B cell (primary cell): ENCODE measurements at regions of chr7 and their contacts with region 1.

Region 1: GRCh38 chr7:77399816-77400215 is 16.3 kb downstream of the GSAP start:
- DNase-seq: no peak
- ATAC-seq: no peak
- H3K4me3 ChIP-seq: no peak overlapping the region
- H3K4me3 Mint-ChIP-seq: peak overlapping the region; percentile 58
- H3K27ac ChIP-seq: peak overlapping the region in 1 of 2 donors; percentile 25
- H3K27ac Mint-ChIP-seq: peak overlapping the region; percentile 84
- H3K4me1 ChIP-seq: peaks cover 19 to 23% of the 10 kb centered on the region in 2 donors
- H3K4me1 Mint-ChIP-seq: peaks cover 45% of the 10 kb centered on the region
- H3K27me3 ChIP-seq: no peaks in the 10 kb centered on the region
- H3K27me3 Mint-ChIP-seq: no peaks in the 10 kb centered on the region
- CTCF ChIP-seq: no peak

Region 2: DNA sequence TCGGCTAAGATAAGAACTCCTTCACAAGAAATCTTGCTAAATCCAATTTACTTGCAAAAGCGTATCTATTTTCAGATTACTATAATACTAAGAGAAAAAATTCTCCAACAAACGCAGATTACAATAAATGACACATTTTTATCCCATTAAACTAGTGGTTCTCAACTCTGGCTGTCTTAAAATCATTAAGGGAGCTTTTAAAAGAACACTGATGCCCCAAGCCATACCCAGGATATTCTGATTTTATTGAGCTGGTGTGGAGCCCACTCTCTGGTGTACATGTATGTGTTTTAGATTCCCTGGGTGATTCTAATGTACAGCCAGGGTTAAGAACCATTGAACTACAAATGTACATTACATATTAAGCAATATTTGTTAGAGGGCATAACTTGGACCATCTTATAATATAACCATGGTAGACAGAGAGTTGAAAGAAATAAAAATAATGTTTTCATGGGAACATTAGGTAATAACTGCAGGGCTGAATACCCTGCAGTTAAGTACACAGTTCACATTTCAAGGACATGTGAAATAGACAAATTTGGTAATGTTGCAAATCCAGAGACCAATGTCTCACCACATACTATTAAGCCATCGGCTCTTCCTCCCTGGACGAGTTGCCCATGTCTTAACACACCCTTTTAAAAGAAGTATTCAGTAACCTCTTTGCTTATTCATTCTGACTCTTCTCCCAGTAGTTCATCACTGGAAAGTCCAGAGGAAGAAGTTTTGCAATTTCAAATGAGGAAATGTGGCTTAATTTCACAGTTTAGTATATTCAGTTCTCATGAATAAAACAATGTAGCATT is 10.1 kb after region 1 on chr7:
- CTCF ChIA-PET with region 1: interaction called, 17 read pairs
- POLR2A ChIA-PET with region 1: interaction called, 9 read pairs
- intact Hi-C with region 1: loop called (anchors 1 kb)
- DNase-seq: no peak
- ATAC-seq: no peak
- H3K4me3 ChIP-seq: no peak overlapping the region
- H3K4me3 Mint-ChIP-seq: no peak overlapping the region
- H3K27ac ChIP-seq: peak overlapping the region in 1 of 2 donors; percentile 30
- H3K27ac Mint-ChIP-seq: peak overlapping the region; percentile 12
- H3K4me1 ChIP-seq: peaks cover 22 to 40% of the 10 kb centered on the region in 2 donors
- H3K4me1 Mint-ChIP-seq: peaks cover 60% of the 10 kb centered on the region
- H3K27me3 ChIP-seq: no peaks in the 10 kb centered on the region
- H3K27me3 Mint-ChIP-seq: no peaks in the 10 kb centered on the region
- CTCF ChIP-seq: no peak

Region 3: DNA sequence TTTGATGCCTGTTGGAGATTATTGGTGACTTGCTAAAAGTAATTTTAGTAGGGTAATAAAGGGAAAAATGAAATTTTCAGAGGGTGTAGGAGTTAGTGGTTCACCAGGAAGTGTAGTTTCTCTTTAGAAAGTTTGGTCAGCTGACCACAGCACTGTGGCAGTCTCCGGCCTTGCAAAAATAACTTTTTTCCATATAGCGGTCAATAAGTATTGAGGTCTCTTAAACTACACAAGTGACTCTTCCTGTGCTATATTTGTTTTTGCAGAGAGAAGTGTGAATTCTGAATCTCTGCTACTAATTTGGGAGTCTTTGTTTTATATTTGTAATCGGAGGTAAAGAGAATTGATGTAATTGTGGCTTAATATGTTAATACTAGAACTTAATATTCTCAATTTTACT is 161.5 kb after region 1 on chr7:
- CTCF ChIA-PET with region 1: no interaction called
- POLR2A ChIA-PET with region 1: no interaction called
- intact Hi-C with region 1: no loop called
- DNase-seq: no peak
- ATAC-seq: no peak
- H3K4me3 ChIP-seq: peak overlapping the region in 2 of 5 experiments; percentile 14 to 26
- H3K4me3 Mint-ChIP-seq: peak overlapping the region; percentile 71
- H3K27ac ChIP-seq: peak overlapping the region in 1 of 2 donors; percentile 56
- H3K27ac Mint-ChIP-seq: peak overlapping the region; percentile 17
- H3K4me1 ChIP-seq: peaks cover 12 to 14% of the 10 kb centered on the region in 2 donors
- H3K4me1 Mint-ChIP-seq: peaks cover 46% of the 10 kb centered on the region
- H3K27me3 ChIP-seq: no peaks in the 10 kb centered on the region
- H3K27me3 Mint-ChIP-seq: no peaks in the 10 kb centered on the region
- CTCF ChIP-seq: no peak